Esophagus muscularis mucosa (tissue), 4 donors: ENCODE measurements at regions of chr6 and their contacts with region 1.

Region 1: DNA sequence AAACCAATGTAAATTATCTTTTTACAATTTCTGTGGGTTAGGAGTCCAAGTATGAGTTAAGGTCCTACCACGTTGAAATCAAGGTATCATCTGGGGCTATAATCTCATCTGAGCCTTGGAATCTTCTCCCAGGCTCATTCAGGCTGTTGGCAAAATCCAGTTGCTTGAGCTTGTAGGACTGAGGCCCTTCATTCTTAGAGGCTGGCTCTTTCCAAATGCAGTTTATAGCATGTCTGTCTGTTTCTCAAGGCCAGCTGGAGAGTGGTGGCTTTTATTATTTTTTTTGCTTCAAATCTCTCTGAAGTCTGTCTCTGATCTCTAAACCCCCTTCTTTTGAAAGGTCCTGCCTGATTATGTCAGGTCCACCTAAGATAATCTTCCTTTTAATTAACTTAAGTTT is 177.2 kb upstream of the ASCC3 start:
- DNase-seq: no peak
- H3K4me3 ChIP-seq: no peak overlapping the region
- H3K27ac ChIP-seq: no peak overlapping the region
- H3K4me1 ChIP-seq: no peaks in the 10 kb centered on the region
- H3K27me3 ChIP-seq: no peaks in the 10 kb centered on the region
- CTCF ChIP-seq: no peak
- EP300 ChIP-seq: no peak
- POLR2A ChIP-seq: no peak

Region 2: GRCh38 chr6:101683884-101684283 is 625.6 kb after region 1 on chr6:
- intact Hi-C with region 1: loop called (anchors 10 kb)
- DNase-seq: no peak
- H3K4me3 ChIP-seq: no peak overlapping the region
- H3K27ac ChIP-seq: no peak overlapping the region
- H3K4me1 ChIP-seq: no peaks in the 10 kb centered on the region
- H3K27me3 ChIP-seq: no peaks in the 10 kb centered on the region
- CTCF ChIP-seq: no peak
- EP300 ChIP-seq: no peak
- POLR2A ChIP-seq: no peak